Activated naive CD4-positive, alpha-beta T cell treated with anti-CD3 and anti-CD28 coated beads for 36 hours (primary cell): ENCODE measurements at regions of chr3 and their contacts with region 1.

Region 1: GRCh38 chr3:4350789-4351163 is 47.6 kb downstream of the SETMAR start:
- DNase-seq: peak; percentile 59
- H3K4me3 Mint-ChIP-seq: peak overlapping the region; percentile 42
- H3K27ac Mint-ChIP-seq: peak overlapping the region; percentile 54
- H3K4me1 Mint-ChIP-seq: peaks cover 17% of the 10 kb centered on the region
- H3K27me3 Mint-ChIP-seq: no peaks in the 10 kb centered on the region

Region 2: DNA sequence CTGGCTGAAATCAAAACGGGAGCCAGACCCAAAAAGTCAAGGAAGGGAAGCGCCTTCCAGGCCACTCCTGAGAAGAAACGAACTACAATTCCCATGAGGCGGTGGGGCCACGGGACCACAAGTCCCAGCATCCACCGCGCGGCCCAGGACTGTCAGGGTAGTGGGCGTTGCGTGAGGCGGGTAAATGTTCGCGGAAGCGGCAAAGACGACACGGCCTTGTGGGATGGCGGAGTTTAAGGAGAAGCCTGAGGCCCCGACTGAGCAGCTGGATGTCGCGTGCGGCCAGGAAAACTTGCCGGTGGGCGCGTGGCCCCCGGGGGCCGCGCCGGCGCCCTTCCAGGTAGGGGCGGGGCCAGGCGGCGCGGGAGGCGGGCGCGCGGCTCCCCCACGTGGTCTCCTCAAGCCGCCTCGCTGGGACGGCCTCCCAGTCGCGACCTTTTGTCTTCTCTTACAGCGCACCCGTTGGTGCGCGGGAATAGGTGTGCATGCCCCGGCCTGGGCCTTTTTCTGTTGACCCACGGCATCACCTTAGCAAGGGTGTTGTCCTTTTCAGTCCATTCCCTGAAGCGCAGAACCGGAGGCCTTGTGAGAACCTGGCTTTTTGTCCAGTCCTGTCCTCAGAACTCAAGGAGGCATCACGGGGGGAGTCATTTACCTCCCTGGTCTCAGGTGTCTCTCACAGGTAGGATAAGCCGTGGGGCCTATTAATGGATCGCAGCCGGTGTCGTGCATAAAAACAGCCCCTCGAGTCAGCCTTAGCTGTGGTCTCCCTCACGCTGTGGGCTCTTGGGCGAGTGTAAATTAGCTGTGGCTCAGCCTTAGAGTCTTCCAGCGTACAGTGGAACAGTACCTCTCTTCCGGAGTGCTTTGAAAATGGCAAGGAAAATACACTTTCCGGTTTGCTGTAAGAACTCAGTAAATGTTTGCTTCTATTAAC is 47.3 kb before region 1 on chr3 and contains the start of gene SETMAR:
- CTCF ChIA-PET with region 1: no interaction called
- intact Hi-C with region 1: loop called (anchors 1 kb)
- DNase-seq: peak; percentile 92
- H3K4me3 Mint-ChIP-seq: peak within 1 kb of the TSS; percentile 89
- H3K27ac Mint-ChIP-seq: peak within 1 kb of the TSS; percentile 98
- H3K4me1 Mint-ChIP-seq: peaks cover 27% of the 10 kb centered on the region
- H3K27me3 Mint-ChIP-seq: no peaks in the 10 kb centered on the region
- total RNA-seq, gene SETMAR: 11.6 to 12.6 TPM

Region 3: GRCh38 chr3:4409415-4409814 is 58.6 kb after region 1 on chr3:
- CTCF ChIA-PET with region 1: interaction called, 7 read pairs
- intact Hi-C with region 1: loop called (anchors 1 kb)
- DNase-seq: peak; percentile 38
- H3K4me3 Mint-ChIP-seq: no peak overlapping the region
- H3K27ac Mint-ChIP-seq: no peak overlapping the region
- H3K4me1 Mint-ChIP-seq: peaks cover 24% of the 10 kb centered on the region
- H3K27me3 Mint-ChIP-seq: no peaks in the 10 kb centered on the region

Region 4: GRCh38 chr3:4512895-4513616 is 162.3 kb after region 1 on chr3:
- CTCF ChIA-PET with region 1: interaction called, 20 read pairs
- intact Hi-C with region 1: no loop called
- DNase-seq: no peak
- H3K4me3 Mint-ChIP-seq: no peak overlapping the region
- H3K27ac Mint-ChIP-seq: no peak overlapping the region
- H3K4me1 Mint-ChIP-seq: peaks cover 23% of the 10 kb centered on the region
- H3K27me3 Mint-ChIP-seq: no peaks in the 10 kb centered on the region

Region 5: GRCh38 chr3:4584456-4585249 is 233.9 kb after region 1 on chr3:
- CTCF ChIA-PET with region 1: interaction called, 6 read pairs
- intact Hi-C with region 1: loop called (anchors 1 kb)
- DNase-seq: peak; percentile 72
- H3K4me3 Mint-ChIP-seq: peak overlapping the region; percentile 70
- H3K27ac Mint-ChIP-seq: peak overlapping the region; percentile 83
- H3K4me1 Mint-ChIP-seq: peaks cover 61% of the 10 kb centered on the region
- H3K27me3 Mint-ChIP-seq: no peaks in the 10 kb centered on the region

Region 6: DNA sequence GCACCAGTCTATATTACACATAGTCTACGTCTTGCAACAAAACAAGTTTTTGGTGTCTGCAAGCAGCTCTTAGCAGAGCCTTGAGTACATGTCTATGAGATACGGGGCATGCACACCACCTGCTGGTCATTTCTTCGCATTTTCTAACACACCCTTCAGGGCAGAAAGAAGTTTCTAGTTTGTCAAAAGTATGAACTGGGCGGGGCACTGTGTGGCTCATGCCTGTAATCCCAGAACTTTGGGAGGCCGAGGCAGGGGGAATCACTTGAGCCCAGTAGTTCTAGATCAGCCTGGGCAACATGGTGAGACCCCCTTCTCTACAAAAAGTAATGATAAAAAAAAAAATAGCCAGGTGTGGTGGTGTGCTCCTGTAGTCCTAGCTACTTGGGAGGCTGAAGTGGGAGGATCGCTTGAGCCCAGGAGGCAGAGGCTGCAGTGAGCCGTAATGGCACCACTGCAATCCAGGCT is 707.1 kb after region 1 on chr3:
- CTCF ChIA-PET with region 1: interaction called, 3 read pairs
- intact Hi-C with region 1: loop called (anchors 1 kb)
- DNase-seq: peak; percentile 91
- H3K4me3 Mint-ChIP-seq: no peak overlapping the region
- H3K27ac Mint-ChIP-seq: no peak overlapping the region
- H3K4me1 Mint-ChIP-seq: peaks cover 5% of the 10 kb centered on the region
- H3K27me3 Mint-ChIP-seq: no peaks in the 10 kb centered on the region